HepG2 (cell line): ENCODE measurements at regions of chr19 and their contacts with region 1.

Region 1: GRCh38 chr19:35716801-35717666 is 769 bp upstream of the KMT2B start:
- DNase-seq: peak; percentile 93
- ATAC-seq: peak; percentile 82
- H3K4me3 ChIP-seq: peak overlapping the region; percentile 69 to 91 (median 81)
- H3K27ac ChIP-seq: peak overlapping the region; percentile 78
- H3K4me1 ChIP-seq: peaks cover 34% of the 10 kb centered on the region
- H3K27me3 ChIP-seq: no peaks in the 10 kb centered on the region
- CTCF ChIP-seq: peak; percentile 89
- EP300 ChIP-seq: no peak
- POLR2A ChIP-seq: peak; percentile 29 to 69; a peak in 3 of 4 replicates
- RAD21 ChIP-seq: peak; percentile 96

Region 2: GRCh38 chr19:35545001-35545911 is 171.8 kb before region 1 on chr19 and contains the start of gene TMEM147:
- CTCF ChIA-PET with region 1: interaction called, 8 read pairs
- POLR2A ChIA-PET with region 1: no interaction called
- in situ Hi-C with region 1: loop called (anchors 5 kb)
- intact Hi-C with region 1: loop called (anchors 1 kb)
- DNase-seq: peak; percentile 72
- ATAC-seq: peak; percentile 91
- H3K4me3 ChIP-seq: peak within 1 kb of the TSS; percentile 89 to 96 (median 92)
- H3K27ac ChIP-seq: peak within 1 kb of the TSS; percentile 66
- H3K4me1 ChIP-seq: peaks cover 47% of the 10 kb centered on the region
- H3K27me3 ChIP-seq: no peaks in the 10 kb centered on the region; a peak in 1 of 5 replicates
- CTCF ChIP-seq: no peak
- EP300 ChIP-seq: no peak
- POLR2A ChIP-seq: peak; percentile 59 to 83
- RAD21 ChIP-seq: peak; percentile 14; the same call in 1 of the 2 replicates
- total RNA-seq, gene TMEM147: 85.8 and 141 TPM in 2 replicates

Region 3: GRCh38 chr19:35693830-35694599 is 23.0 kb before region 1 on chr19:
- CTCF ChIA-PET with region 1: interaction called, 201 read pairs
- POLR2A ChIA-PET with region 1: no interaction called
- in situ Hi-C with region 1: no loop called
- intact Hi-C with region 1: loop called (anchors 1 kb)
- DNase-seq: peak; percentile 81
- ATAC-seq: peak; percentile 96
- H3K4me3 ChIP-seq: no peak overlapping the region
- H3K27ac ChIP-seq: no peak overlapping the region
- H3K4me1 ChIP-seq: peaks cover 32% of the 10 kb centered on the region
- H3K27me3 ChIP-seq: no peaks in the 10 kb centered on the region
- CTCF ChIP-seq: peak; percentile 97
- EP300 ChIP-seq: no peak
- POLR2A ChIP-seq: no peak
- RAD21 ChIP-seq: peak; percentile 98

Region 4: DNA sequence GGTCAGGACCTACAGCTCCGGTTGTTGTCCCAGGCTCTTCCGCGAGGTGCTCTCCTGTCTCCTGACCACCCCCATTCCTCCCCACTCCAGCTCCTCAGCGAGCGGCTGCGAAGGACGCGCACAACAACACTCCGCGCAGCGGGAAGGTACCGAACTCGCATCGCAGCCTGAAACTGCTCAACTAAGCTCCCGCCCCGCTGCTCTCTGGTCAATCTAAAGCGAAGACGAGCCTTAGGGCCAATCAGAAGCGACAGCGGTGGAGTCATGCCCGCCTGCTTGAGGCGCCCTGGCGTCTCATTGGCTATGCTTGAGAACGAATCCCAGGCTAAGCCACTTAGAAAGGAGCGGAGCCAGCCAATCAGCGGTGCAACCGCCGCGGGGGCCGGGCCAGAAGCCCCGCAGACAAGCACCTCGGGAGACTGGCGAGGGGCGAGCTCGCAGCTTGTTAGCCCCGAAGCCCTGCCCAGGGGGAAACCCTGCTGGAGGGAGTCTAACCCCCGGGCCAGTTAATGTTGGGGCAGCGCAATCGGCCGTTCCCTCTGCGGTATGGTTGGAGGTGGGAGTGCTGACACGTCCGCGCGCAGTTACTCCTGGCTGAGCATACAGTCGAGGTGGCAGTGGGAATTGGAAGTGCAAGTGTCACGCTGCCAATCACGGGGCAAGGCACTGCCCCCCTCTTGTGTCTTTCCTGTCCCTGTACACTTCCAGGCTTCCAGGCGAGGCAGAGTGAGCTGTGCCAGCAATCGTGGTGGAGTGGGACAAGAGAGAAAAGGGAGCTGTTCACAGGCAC is 14.6 kb before region 1 on chr19:
- CTCF ChIA-PET with region 1: interaction called, 7 read pairs
- POLR2A ChIA-PET with region 1: interaction called, 23 read pairs
- in situ Hi-C with region 1: no loop called
- intact Hi-C with region 1: no loop called
- DNase-seq: peak; percentile 96
- ATAC-seq: peak; percentile 99
- H3K4me3 ChIP-seq: peak overlapping the region; percentile 50 to 77 (median 70)
- H3K27ac ChIP-seq: peak overlapping the region; percentile 56
- H3K4me1 ChIP-seq: peaks cover 29% of the 10 kb centered on the region
- H3K27me3 ChIP-seq: no peaks in the 10 kb centered on the region
- CTCF ChIP-seq: peak; percentile 22; the same call in 1 of the 2 replicates
- EP300 ChIP-seq: no peak
- POLR2A ChIP-seq: peak in 1 of 2 experiments; percentile 79; a peak in 2 of 4 replicates
- RAD21 ChIP-seq: no peak

Region 5: DNA sequence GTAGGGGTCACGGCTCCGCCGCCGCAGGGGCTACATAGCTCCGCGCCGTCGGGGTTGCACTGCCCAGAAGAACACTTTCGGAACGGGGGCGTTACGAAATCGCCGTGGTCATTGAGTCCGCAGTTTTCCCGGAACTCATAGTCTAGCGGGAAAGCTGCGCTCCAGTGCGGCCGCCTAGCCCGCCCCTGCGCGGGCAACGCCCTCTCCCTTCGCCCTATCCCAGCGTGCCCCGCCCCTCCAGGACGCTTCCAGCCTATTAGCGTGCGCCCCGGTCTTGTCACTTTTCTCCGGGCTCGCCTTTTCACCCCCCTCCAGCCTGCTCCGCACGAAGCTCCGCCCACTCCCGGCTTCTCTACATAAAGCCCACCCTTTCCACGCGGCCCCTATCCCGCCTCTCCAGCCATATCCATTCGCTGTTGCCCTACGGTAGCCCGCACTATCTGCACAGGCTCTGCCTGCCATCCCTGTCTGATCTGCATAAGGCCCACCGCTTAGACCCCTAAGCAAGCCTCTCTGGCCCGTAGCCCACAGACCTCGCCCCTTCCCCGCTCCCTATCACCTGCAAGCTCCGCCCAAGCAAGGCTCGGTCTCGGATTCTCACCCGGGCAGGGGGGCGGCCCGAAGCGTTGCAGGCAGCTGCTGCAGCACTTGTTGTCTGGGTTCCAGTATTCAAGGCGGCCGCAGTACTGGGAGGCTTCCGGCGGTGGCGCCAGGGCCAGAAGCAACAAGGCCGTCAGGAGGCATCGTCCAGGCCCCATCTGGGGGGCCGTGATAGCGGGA is 23.6 kb after region 1 on chr19:
- CTCF ChIA-PET with region 1: no interaction called
- POLR2A ChIA-PET with region 1: interaction called, 69 read pairs
- in situ Hi-C with region 1: no loop called
- intact Hi-C with region 1: loop called (anchors 2 kb)
- DNase-seq: peak; percentile 96
- ATAC-seq: peak; percentile 84
- H3K4me3 ChIP-seq: peak overlapping the region; percentile 65 to 84 (median 80)
- H3K27ac ChIP-seq: peak overlapping the region; percentile 89
- H3K4me1 ChIP-seq: peaks cover 29% of the 10 kb centered on the region
- H3K27me3 ChIP-seq: no peaks in the 10 kb centered on the region; a peak in 1 of 5 replicates
- CTCF ChIP-seq: peak; percentile 61
- EP300 ChIP-seq: peak in 1 of 2 experiments; percentile 29; a peak in 1 of 4 replicates
- POLR2A ChIP-seq: peak; percentile 73 to 90
- RAD21 ChIP-seq: 0 out of 2 replicates have a peak, but pooled peaks have one; percentile 46

Region 6: DNA sequence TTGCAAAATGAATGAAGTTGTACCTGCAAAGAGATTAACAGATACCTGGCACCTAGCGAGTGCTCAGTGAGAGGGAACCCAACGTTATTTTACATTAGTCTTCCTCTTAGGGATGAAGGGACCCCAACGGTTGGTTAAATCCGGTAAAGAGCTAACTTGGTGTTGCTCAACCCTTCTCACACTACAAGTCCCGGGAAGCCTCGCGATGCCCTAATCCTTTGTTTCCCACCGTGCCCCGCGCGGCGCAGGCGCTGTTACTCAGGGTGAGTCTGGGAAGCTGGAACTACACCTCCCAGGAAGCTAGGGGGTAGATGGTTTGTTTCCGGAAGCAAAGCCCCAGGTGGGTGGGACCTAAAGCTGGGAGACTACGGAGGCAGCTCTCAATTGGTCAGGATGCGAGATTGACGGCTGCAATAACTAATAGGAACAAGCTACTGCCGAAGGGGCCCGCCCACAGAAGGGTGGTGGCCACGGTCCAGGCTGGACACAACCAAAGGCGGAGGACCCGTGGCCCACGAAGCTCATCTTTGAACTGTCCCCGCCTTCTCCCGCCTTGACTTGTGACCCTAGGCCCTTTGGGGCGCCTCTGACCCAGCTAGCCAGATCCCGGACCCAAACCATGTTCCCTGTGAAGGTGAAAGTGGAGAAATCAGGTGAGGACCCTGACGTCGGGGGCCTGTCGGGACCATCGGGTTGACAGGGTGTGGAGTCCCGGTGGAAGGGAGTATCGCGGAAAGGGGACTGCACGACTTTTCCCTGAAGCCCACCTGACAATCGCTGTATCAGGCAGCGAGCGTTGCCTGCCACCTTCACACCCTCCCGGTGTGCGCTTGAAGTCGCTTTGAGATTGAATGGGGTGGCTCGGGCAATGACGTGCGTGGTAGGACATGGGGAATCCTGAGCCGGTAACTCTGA is 31.3 kb after region 1 on chr19 and contains the start of gene LIN37:
- CTCF ChIA-PET with region 1: no interaction called
- POLR2A ChIA-PET with region 1: interaction called, 19 read pairs
- in situ Hi-C with region 1: no loop called
- intact Hi-C with region 1: no loop called
- DNase-seq: peak; percentile 99
- ATAC-seq: peak; percentile 91
- H3K4me3 ChIP-seq: peak within 1 kb of the TSS; percentile 89 to 100 (median 89)
- H3K27ac ChIP-seq: peak within 1 kb of the TSS; percentile 68
- H3K4me1 ChIP-seq: peaks cover 41% of the 10 kb centered on the region
- H3K27me3 ChIP-seq: no peaks in the 10 kb centered on the region; a peak in 1 of 5 replicates
- CTCF ChIP-seq: no peak
- EP300 ChIP-seq: no peak
- POLR2A ChIP-seq: peak; percentile 83 to 93
- RAD21 ChIP-seq: no peak
- total RNA-seq, gene LIN37: 3.5 and 6.3 TPM in 2 replicates

Region 7: DNA sequence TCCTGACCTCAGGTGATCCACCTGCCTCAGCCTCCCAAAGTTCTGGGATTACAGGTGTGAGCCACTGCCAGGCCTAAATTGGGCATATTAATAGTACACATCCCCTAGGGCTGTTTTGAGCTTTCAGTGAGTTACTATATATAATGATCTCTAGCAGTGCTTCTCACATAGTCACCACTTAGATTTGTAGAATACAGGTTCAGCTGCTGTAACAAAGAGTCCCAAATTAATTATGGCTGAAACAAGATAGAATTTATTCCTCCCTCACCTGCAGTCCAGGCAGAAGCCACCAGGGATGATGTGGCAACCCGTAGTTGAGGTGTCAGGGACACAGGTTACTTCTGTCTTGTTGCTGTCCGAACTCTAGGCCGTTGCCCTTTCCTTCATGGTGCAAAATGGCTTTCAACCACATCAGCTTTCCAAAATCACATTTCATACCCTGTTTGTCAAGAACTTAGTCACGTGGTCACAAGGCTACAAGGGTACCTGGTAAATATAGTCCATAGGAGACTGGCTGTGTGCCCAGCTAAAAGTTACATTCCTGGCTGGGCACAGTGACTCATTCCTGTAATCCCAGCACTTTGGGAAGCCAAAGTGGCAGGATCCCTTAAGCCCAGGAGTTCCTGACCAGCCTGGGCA is 43.8 kb after region 1 on chr19:
- CTCF ChIA-PET with region 1: no interaction called
- POLR2A ChIA-PET with region 1: no interaction called
- in situ Hi-C with region 1: no loop called
- intact Hi-C with region 1: no loop called
- DNase-seq: no peak
- ATAC-seq: no peak
- H3K4me3 ChIP-seq: no peak overlapping the region
- H3K27ac ChIP-seq: no peak overlapping the region
- H3K4me1 ChIP-seq: peaks cover 20% of the 10 kb centered on the region
- H3K27me3 ChIP-seq: no peaks in the 10 kb centered on the region
- CTCF ChIP-seq: no peak
- EP300 ChIP-seq: no peak
- POLR2A ChIP-seq: no peak
- RAD21 ChIP-seq: no peak

Region 8: DNA sequence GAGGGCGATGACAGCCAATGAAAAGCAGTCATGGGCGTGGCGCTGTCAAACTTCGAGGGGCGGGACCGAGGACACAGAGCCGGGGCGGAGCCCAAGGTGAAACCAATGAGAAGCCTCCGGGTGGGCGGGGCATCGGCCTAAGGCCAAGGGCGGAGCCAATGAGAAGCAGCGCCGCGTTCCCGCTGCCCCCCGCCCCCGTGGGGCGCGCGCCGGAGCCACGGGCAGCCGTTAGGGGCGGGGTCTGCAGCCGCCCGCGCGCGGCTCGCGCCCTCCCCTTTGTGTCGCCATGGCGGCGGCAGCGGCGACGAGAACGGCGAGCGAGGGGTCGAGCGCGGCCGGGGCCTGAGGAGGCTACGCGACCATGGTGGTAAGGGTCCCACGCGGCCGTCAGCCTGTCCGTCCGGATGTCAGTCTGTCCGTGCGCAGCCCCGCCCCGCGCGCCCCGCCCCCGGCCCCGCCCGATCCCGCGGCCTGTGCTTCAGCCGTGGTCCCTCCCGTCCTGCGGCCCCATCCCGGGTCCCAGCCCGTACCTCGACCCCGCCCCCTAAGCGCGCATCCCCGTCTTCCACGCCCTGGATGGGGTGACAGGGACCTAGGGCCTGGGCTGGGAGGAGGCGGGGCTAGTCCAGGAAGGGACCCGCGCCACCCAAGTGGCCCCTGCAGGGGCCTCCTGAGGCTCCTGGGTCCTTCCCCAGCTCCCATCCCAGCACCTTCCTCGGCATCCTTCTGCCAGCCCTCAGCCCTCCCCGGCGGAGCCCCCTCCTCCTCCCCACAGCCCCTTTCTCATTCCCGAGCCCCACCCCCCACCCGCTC is 58.5 kb after region 1 on chr19 and contains the start of gene ARHGAP33:
- CTCF ChIA-PET with region 1: no interaction called
- POLR2A ChIA-PET with region 1: no interaction called
- in situ Hi-C with region 1: no loop called
- intact Hi-C with region 1: no loop called
- DNase-seq: peak; percentile 94
- ATAC-seq: peak; percentile 88
- H3K4me3 ChIP-seq: peak within 1 kb of the TSS; percentile 62 to 78 (median 75)
- H3K27ac ChIP-seq: no peak within 1 kb of the TSS
- H3K4me1 ChIP-seq: peaks cover 43% of the 10 kb centered on the region
- H3K27me3 ChIP-seq: no peaks in the 10 kb centered on the region
- CTCF ChIP-seq: no peak
- EP300 ChIP-seq: no peak
- POLR2A ChIP-seq: no peak; a peak in 1 of 4 replicates
- RAD21 ChIP-seq: no peak
- total RNA-seq, gene ARHGAP33: 0.83 and 1.3 TPM in 2 replicates